Psoas muscle (tissue), 8 donors: ENCODE measurements at regions of chr6 and their contacts with region 1.

Region 1: DNA sequence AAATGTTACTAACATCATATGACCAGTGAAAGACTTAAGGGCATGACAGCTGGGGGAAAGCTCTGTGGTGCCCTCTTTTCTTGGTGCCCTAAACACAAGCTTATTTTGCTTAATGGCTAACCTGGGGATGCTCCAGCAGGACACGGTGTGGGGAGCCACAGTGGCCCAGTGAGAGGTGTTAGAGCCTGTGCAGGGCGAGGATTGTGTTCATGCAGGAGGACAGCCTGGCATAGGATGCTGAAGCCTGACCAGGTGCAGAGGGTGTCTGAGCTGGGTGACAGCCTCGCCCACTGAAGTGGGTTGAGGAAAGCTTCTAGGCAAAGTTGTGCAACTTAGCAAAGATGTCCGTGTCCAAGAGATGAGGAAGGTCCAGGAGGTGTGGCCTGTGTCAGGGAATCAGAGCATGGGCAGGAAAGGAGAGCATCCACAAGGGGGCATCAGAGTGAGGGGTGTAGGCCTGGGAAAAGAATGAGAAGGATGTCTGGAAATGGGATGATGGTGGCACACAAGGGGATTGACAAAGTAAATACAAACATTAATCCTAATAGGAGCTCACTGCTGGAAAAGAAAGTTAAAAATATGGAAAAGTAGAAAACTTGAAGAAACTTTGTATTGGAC is 33.9 kb downstream of the SLC17A4 start:
- DNase-seq: peak in 1 of 2 donors; percentile 54
- ATAC-seq: peak in 2 of 4 donors; percentile 55 to 59
- H3K4me3 ChIP-seq: no peak overlapping the region
- H3K27ac ChIP-seq: no peak overlapping the region
- H3K4me1 ChIP-seq: no peaks in the 10 kb centered on the region
- H3K27me3 ChIP-seq: no peaks in the 10 kb centered on the region
- CTCF ChIP-seq: peak; percentile 27

Region 2: DNA sequence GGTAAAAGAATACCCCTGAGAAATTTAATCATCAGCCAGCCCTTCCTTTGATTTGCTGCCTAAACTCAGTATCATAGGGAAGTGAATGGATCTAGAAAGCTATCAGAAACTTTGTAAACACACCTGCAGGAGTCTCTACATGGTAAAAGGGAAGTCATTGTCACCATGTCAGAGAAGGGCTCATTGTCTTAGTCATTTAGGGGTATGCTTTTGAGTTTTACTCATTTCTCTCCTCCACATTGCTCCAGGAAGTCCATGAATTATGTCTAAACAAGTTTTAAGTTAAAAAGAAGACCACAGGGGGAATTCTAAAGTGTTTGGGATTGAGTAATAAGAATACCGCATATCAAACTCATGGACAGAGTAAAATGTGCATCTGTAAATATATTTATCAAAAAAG is 41.0 kb after region 1 on chr6:
- intact Hi-C with region 1: no loop called
- DNase-seq: no peak
- ATAC-seq: no peak
- H3K4me3 ChIP-seq: no peak overlapping the region
- H3K27ac ChIP-seq: no peak overlapping the region
- H3K4me1 ChIP-seq: no peaks in the 10 kb centered on the region
- H3K27me3 ChIP-seq: peaks cover 0 to 13% (median 2%) of the 10 kb centered on the region in 3 donors
- CTCF ChIP-seq: no peak

Region 3: GRCh38 chr6:25889877-25890853 is 101.8 kb after region 1 on chr6:
- intact Hi-C with region 1: loop called in 1 of 2 experiments (anchors 5 kb)
- DNase-seq: no peak
- ATAC-seq: peak in 2 of 4 donors; percentile 49 to 51
- H3K4me3 ChIP-seq: no peak overlapping the region
- H3K27ac ChIP-seq: no peak overlapping the region
- H3K4me1 ChIP-seq: no peaks in the 10 kb centered on the region
- H3K27me3 ChIP-seq: no peaks in the 10 kb centered on the region
- CTCF ChIP-seq: peak; percentile 38

Region 4: DNA sequence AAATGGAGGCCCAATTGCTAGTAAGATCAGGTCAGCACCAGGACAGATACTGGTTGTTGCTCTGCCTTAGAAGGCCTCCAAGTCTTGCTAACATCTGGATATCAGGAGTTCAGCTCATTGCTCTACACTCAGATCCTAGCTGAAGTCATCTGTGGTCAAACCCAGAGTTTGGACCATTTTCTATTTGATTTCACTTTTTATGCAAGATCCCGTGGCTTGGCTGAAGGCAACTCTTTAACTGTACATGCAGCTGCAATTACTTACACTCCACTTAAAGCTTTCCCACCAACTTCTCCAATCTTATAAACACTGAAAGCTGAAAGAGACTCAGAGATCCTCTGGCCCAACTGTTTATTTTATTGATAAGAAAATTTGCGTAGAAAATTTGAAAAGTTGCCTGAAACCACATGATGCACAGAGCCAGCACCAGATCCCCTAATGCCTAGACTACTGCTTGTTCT is 139.4 kb after region 1 on chr6:
- intact Hi-C with region 1: loop called in 1 of 2 experiments (anchors 10 kb)
- DNase-seq: no peak
- ATAC-seq: no peak
- H3K4me3 ChIP-seq: no peak overlapping the region
- H3K27ac ChIP-seq: no peak overlapping the region
- H3K4me1 ChIP-seq: no peaks in the 10 kb centered on the region
- H3K27me3 ChIP-seq: peaks cover 0 to 3% (median 0%) of the 10 kb centered on the region in 3 donors
- CTCF ChIP-seq: no peak

Region 5: GRCh38 chr6:26003102-26003694 is 214.8 kb after region 1 on chr6:
- intact Hi-C with region 1: loop called in 1 of 2 experiments (anchors 10 kb)
- DNase-seq: peak; percentile 39 to 57
- ATAC-seq: peak; percentile 27 to 87 (median 70)
- H3K4me3 ChIP-seq: no peak overlapping the region
- H3K27ac ChIP-seq: no peak overlapping the region
- H3K4me1 ChIP-seq: no peaks in the 10 kb centered on the region
- H3K27me3 ChIP-seq: no peaks in the 10 kb centered on the region
- CTCF ChIP-seq: peak; percentile 75

Region 6: DNA sequence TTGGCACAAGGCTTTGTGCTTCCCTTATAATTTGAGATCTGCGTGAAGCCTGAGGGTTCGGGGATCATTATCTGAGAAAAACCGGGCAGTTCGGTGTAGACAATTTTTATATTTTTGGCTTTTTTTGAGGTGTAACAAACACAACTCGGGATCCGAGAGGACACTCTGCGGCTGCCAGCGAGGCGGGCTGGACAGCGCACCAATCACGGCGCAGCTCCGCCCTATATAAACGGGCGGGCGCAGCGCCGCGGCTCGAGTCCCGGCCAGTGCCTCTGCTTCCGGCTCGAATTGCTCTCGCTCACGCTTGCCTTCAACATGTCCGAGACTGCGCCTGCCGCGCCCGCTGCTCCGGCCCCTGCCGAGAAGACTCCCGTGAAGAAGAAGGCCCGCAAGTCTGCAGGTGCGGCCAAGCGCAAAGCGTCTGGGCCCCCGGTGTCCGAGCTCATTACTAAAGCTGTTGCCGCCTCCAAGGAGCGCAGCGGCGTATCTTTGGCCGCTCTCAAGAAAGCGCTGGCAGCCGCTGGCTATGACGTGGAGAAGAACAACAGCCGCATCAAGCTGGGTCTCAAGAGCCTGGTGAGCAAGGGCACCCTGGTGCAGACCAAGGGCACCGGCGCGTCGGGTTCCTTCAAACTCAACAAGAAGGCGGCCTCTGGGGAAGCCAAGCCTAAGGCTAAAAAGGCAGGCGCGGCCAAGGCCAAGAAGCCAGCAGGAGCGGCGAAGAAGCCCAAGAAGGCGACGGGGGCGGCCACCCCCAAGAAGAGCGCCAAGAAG is 367.8 kb after region 1 on chr6:
- intact Hi-C with region 1: no loop called
- DNase-seq: peak; percentile 90 to 96
- ATAC-seq: peak; percentile 82 to 86 (median 84)
- H3K4me3 ChIP-seq: peak overlapping the region; percentile 88
- H3K27ac ChIP-seq: peak overlapping the region; percentile 98
- H3K4me1 ChIP-seq: peaks cover 15% of the 10 kb centered on the region
- H3K27me3 ChIP-seq: no peaks in the 10 kb centered on the region
- CTCF ChIP-seq: no peak